ENCODE measurements at regions of chr7 and their contacts with region 1.

Region 1: GRCh38 chr7:97104719-97105238 is 12.7 kb upstream of the SDHAF3 start:
- DNase-seq: peak; percentile 74
- ATAC-seq: peak; percentile 94
- H3K4me3 Mint-ChIP-seq: no peak overlapping the region
- H3K27ac Mint-ChIP-seq: no peak overlapping the region
- H3K4me1 Mint-ChIP-seq: no peaks in the 10 kb centered on the region
- H3K27me3 Mint-ChIP-seq: peaks cover 16% of the 10 kb centered on the region
- CTCF ChIP-seq: peak; percentile 72

Region 2: DNA sequence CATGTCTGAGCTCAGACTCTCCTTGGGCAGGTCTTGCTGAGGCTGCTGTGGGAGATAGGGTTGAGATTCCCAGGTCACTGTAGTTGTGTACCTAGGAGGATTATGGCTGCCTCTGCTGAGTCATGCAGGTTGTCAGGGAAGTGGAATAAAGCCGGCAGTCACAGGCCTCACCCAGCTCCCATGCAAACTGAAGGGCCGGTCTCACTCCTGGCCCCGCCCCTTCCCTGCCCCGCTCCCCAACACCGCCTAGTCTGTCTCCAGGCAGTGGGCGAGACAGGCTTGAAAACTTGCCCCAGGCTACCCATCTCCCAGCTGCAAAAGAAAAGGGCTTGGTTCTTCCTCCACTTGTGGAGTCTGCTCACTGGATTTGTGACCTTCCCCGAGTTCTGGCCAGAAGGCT is 28.9 kb before region 1 on chr7:
- CTCF ChIA-PET with region 1: no interaction called
- POLR2A ChIA-PET with region 1: no interaction called
- intact Hi-C with region 1: no loop called
- DNase-seq: no peak
- ATAC-seq: no peak
- H3K4me3 Mint-ChIP-seq: no peak overlapping the region
- H3K27ac Mint-ChIP-seq: no peak overlapping the region
- H3K4me1 Mint-ChIP-seq: peaks cover 25% of the 10 kb centered on the region
- H3K27me3 Mint-ChIP-seq: peaks cover 12% of the 10 kb centered on the region
- CTCF ChIP-seq: no peak

Region 3: DNA sequence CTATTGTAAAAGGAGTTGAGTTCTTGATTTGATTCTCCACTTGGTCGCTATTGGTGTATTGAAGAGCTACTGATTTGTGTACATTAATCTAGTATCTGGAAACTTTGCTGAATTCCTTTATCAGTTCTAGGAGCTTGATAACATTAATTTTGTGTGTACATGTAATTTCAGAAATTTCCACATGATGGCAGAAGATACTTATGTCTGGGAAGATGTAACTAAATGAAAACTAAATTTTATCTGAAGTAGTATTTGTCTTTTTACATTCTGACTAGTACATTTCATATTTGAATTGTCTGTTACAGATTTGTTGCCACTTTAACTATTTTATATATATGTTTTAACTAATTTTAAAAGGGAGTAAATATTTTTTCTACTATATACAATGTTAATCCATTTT is 40.3 kb after region 1 on chr7:
- CTCF ChIA-PET with region 1: no interaction called
- POLR2A ChIA-PET with region 1: no interaction called
- intact Hi-C with region 1: loop called (anchors 5 kb)
- DNase-seq: no peak
- ATAC-seq: no peak
- H3K4me3 Mint-ChIP-seq: no peak overlapping the region
- H3K27ac Mint-ChIP-seq: no peak overlapping the region
- H3K4me1 Mint-ChIP-seq: no peaks in the 10 kb centered on the region
- H3K27me3 Mint-ChIP-seq: no peaks in the 10 kb centered on the region
- CTCF ChIP-seq: no peak

Region 4: DNA sequence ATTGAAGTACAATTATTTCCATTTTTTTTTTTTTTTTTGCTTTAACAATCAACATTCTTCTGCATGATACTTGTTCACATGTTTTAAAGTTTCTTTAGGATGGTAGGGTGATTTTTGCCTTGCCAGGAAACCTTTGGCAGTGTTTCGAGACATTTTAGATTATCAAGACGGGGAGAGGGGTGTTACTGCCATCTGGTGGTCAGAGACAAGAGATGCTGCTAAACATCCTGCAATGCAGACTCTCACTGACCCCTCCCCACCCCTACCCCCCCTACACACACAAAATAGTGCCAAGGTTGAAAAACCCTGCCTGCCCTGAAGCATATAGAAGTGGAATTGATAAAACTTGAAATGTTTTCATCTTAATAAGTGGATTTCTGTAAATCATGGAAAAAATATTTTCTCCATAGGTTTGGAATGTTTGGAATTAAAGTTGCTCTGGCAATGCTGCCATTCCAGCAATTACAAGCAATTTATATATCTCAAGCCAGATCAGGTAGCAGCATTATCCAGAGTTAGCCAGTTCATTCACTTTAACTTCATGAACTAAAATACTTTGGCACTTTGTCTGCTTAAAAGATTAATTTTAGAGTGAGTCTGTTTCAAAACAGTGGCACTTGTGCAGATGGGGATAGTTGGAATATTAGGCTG is 74.8 kb after region 1 on chr7:
- CTCF ChIA-PET with region 1: interaction called, 21 read pairs
- POLR2A ChIA-PET with region 1: no interaction called
- intact Hi-C with region 1: loop called (anchors 1 kb)
- DNase-seq: no peak
- ATAC-seq: peak; percentile 79
- H3K4me3 Mint-ChIP-seq: no peak overlapping the region
- H3K27ac Mint-ChIP-seq: no peak overlapping the region
- H3K4me1 Mint-ChIP-seq: peaks cover 6% of the 10 kb centered on the region
- H3K27me3 Mint-ChIP-seq: no peaks in the 10 kb centered on the region
- CTCF ChIP-seq: peak; percentile 63

Region 5: GRCh38 chr7:97845622-97846203 is 740.9 kb after region 1 on chr7:
- CTCF ChIA-PET with region 1: interaction called, 19 read pairs
- POLR2A ChIA-PET with region 1: no interaction called
- intact Hi-C with region 1: loop called (anchors 2 kb)
- DNase-seq: no peak
- ATAC-seq: no peak
- H3K4me3 Mint-ChIP-seq: no peak overlapping the region
- H3K27ac Mint-ChIP-seq: no peak overlapping the region
- H3K4me1 Mint-ChIP-seq: no peaks in the 10 kb centered on the region
- H3K27me3 Mint-ChIP-seq: no peaks in the 10 kb centered on the region
- CTCF ChIP-seq: no peak

Measured in activated B cell treated with CpG ODN at 0.5 μM for 24 hours (primary cell).